Motor neuron (in vitro differentiated cells): ENCODE measurements at regions of chrX and their contacts with region 1.

Region 1: GRCh38 chrX:39149761-39150160 is 348.5 kb downstream of the MID1IP1 start:
- ATAC-seq: peak; percentile 45 to 78 (median 59)
- H3K4me3 ChIP-seq: no peak overlapping the region
- H3K27ac ChIP-seq: no peak overlapping the region
- H3K4me1 ChIP-seq: peaks cover 2 to 19% of the 10 kb centered on the region in 2 donors

Region 2: DNA sequence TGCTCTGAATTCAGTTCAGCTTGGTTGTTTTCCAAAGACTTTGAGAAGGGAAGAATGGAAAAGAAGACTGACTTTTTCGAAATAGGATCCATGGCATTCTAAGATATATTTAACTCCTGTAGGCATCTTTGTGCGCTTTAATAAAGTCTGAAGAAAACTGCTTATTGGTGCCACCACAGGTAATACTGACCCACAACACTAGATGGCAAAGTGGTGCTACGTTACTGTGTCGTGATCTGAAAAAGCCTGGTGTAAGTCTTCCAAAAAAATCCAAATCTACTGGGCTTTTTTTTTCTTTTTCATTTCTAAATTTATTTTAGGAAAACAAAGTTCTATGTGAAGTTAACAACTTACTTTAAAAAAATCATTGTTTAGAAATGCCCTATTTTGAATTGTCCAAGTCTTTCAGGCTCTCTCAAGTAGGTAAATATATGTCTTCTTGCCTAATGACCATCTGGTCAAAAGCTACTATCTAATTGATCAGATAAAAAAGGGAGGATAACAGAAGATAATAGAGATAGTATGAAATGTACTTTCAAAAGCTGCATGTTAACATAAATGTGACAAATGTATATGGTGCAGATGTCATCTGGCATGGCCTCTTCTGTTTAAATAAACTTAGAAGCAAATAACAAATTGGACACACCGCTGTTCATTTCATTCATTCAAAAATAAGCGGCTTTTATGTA is 395.5 kb before region 1 on chrX:
- in situ Hi-C with region 1: loop called in 1 of 9 experiments (anchors 25 kb)
- ATAC-seq: peak in 4 of 8 experiments; percentile 33 to 59 (median 41)
- H3K4me3 ChIP-seq: no peak overlapping the region
- H3K27ac ChIP-seq: no peak overlapping the region
- H3K4me1 ChIP-seq: peaks cover 7 to 13% of the 10 kb centered on the region in 2 donors